ENCODE measurements at regions of chr19 and their contacts with region 1.

Region 1: DNA sequence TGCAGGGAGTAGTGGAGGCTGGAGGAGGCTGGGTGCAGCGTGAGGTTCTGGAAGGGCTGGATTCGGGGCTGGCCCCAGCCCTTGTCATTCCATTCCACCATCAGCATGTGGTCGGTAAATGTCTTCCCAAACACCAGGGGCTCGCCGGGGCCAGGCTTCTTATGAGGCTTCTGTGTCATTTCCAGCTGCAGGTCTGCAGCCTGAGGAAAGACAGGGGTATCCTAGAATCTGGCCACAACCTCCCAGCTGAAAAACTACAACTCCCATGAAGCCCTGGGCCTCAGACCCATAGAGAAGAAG is 4.4 kb downstream of the BCAT2 start:
- DNase-seq: no peak
- ATAC-seq: no peak
- H3K4me3 ChIP-seq: no peak overlapping the region
- H3K27ac ChIP-seq: no peak overlapping the region
- H3K4me1 ChIP-seq: peaks cover 5% of the 10 kb centered on the region; the same call in 1 of the 2 replicates
- H3K27me3 ChIP-seq: no peaks in the 10 kb centered on the region
- CTCF ChIP-seq: no peak
- POLR2A ChIP-seq: no peak
- RAD21 ChIP-seq: no peak

Region 2: GRCh38 chr19:48858984-48859710 is 52.7 kb after region 1 on chr19:
- CTCF ChIA-PET with region 1: no interaction called
- POLR2A ChIA-PET with region 1: no interaction called
- dilution Hi-C with region 1: loop called (anchors 10 kb)
- in situ Hi-C with region 1: no loop called
- intact Hi-C with region 1: no loop called
- DNase-seq: no peak
- ATAC-seq: no peak
- H3K4me3 ChIP-seq: no peak overlapping the region
- H3K27ac ChIP-seq: no peak overlapping the region
- H3K4me1 ChIP-seq: no peaks in the 10 kb centered on the region
- H3K27me3 ChIP-seq: no peaks in the 10 kb centered on the region
- CTCF ChIP-seq: no peak
- POLR2A ChIP-seq: no peak
- RAD21 ChIP-seq: no peak

Measured in IMR-90 (cell line).